GM18951 (cell line): ENCODE measurements at regions of chr2 and their contacts with region 1.

Region 1: DNA sequence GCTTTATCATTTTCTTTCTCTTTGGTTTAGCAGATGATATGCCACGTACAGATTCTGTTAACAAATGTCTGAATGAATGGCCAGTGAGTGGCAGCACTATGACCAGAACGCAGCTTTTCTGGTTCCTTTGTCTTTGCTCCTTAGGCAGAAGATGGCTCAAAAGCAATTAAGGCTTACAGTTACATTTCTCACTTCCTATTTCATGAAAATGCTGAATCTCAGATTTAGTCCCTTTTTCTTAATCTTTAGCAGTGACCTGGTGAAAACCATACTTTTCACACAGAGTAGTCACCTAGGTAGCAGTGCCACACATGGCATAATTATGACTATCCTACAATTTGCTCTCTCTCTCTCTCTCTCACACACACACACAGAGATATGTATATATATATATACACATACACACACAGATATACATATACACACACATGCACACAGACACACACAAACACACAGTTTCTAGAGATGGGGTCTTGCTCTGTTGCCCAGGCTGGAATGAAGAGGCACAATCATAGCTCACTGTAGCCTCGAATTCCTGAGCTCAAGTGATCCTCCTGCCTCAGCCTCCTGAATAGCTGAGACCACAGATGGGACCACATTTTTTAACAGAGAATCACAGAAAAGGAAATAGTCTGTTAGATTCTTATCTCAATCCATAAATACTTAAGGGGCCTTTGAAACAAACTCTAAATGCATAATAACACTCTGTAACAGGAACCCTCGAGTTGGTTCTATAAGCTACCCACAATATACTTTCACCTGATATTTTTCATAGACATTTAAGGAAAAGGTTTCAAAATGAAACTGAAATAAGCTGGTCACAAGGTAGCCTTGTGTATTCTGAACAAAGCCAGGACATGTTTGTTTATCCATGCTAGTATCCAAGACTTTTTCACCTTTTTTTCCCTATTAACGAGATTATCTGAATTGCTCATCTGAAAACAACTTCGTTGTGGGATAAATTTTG is 11.6 kb downstream of the PDE6D start:
- POLR2A ChIP-seq: no peak

Region 2: DNA sequence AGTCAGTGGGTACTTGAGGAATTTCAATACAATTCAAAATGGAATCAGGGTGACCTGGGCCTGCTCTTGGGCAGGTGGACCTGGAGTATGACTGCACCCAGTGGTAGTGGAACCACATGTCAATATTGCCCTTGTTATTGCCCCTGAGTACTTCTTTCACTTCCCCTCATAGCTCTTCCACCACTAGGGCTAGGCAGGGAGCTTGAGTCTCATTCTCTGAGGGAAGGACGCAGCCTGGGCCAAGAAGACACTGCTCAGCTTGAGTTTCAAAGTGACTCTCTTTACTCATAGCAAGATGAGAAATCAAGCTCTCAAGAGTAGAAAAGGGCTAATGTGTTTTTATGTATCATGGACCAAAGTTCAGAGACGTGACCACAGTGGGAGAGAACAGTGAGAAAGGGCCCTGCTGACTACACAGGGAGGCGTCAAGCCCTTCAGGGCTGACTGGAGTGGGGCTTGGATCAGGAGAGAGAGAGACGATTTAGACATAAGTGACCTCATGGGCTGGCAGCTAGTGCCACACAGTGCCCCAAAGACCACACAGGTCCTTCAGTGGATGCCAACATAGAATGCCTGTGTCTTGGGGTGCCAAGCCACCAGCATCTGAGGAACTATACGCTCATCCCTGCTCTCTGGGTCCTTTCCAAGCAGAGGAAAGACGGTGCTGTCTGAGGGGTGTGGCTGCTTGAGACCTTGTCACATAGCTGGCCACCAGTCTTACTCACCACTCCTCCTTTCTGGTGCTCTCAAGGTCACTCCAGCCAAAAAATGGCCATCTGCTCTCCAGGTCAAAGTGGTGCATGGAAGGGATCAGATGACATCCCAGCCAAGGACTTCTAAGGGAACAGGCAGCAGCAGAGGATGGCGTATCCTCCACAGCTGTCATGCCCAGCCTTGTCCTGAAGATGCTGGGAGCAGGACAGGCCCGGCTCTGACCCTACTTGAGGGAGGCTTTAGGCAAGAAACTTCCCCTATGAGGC is 48.2 kb before region 1 on chr2:
- in situ Hi-C with region 1: loop called (anchors 10 kb)
- POLR2A ChIP-seq: no peak

Region 3: DNA sequence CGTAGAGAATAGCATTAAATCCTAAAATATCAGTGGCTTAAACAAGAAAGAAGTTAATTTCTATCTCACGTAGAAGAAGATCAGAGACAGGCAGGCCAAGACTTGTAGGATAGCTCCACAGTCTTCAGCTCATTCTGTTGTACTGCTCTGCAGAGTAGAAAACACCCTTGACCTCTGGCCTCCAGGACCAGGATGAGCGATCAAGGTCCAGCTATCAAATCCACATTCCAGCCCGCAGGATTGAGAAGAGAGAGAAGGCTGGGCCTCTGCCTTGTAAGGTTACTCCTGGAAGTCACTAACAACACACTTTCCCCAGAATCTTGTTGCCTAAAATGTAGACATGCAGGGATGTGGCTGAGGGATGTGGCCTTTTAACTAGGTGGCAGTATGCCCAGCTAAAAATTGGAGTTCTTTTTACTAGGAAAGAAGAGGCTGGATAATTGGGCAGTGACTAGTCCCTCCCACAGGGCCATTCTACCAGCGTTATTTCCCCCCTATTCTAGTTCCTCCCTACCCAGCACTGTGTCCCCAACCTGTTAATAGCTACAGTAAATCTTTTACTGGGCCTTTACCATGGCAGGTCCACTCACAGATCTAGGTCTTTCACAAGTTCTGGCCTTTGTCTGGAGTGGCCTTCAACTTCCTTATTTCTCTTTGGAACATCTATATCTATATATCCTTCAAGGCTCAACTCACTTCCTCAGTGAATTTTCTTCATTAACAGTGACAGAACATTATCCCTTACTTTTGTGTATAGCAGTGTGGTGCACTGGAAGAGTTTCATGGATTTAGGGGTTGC is 357.0 kb after region 1 on chr2:
- in situ Hi-C with region 1: no loop called
- POLR2A ChIP-seq: no peak